H1 (cell line): ENCODE measurements at regions of chr15 and their contacts with region 1.

Region 1: GRCh38 chr15:65824031-65824743 is 32.1 kb upstream of the DENND4A start:
- DNase-seq: peak in 1 of 2 experiments; percentile 70
- H3K4me3 ChIP-seq: no peak overlapping the region
- H3K27ac ChIP-seq: no peak overlapping the region
- H3K4me1 ChIP-seq: peaks cover 0 to 6% (median 2%) of the 10 kb centered on the region in 4 experiments; a peak in 4 of 7 replicates
- H3K27me3 ChIP-seq: no peaks in the 10 kb centered on the region
- CTCF ChIP-seq: peak; percentile 42 to 89 (median 68)
- EP300 ChIP-seq: no peak
- POLR2A ChIP-seq: no peak
- RAD21 ChIP-seq: peak; percentile 59 to 74

Region 2: DNA sequence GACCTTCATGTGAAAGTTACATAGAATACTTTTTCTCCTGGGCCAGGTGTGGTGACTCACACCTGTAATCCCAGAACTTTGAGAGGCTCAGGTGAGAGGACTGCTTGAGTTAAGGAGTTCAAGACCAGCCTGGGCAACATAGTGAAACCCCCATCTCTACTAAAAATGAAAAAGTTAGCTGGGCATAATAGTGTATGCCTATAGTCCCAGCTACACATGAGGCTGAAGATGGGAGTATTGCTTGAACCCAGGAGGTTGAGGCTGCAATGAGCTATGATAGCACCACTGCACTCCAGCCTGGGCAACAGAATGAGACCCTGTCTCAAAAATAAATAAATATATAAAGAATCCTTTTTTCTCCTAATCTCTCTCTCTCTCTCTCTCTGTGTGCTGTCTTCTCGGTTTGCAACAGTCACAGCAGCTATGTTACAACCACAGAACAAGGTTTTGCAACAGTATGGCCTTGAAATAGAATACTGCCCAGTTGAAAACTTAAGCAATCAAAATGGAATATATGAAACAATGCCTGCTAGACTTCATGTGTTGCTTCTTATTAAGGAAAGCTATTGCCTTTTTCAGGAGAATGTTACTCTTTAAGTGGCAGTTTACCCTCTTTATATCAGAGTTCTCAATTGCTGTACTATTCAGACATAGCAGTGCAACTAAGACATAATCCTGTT is 19.8 kb before region 1 on chr15:
- CTCF ChIA-PET with region 1: interaction called, 11 read pairs
- POLR2A ChIA-PET with region 1: no interaction called
- DNase-seq: no peak
- H3K4me3 ChIP-seq: no peak overlapping the region
- H3K27ac ChIP-seq: no peak overlapping the region
- H3K4me1 ChIP-seq: peaks cover 0 to 5% (median 0%) of the 10 kb centered on the region in 4 experiments; a peak in 1 of 7 replicates
- H3K27me3 ChIP-seq: no peaks in the 10 kb centered on the region
- CTCF ChIP-seq: no peak
- EP300 ChIP-seq: no peak
- POLR2A ChIP-seq: no peak
- RAD21 ChIP-seq: no peak

Region 3: DNA sequence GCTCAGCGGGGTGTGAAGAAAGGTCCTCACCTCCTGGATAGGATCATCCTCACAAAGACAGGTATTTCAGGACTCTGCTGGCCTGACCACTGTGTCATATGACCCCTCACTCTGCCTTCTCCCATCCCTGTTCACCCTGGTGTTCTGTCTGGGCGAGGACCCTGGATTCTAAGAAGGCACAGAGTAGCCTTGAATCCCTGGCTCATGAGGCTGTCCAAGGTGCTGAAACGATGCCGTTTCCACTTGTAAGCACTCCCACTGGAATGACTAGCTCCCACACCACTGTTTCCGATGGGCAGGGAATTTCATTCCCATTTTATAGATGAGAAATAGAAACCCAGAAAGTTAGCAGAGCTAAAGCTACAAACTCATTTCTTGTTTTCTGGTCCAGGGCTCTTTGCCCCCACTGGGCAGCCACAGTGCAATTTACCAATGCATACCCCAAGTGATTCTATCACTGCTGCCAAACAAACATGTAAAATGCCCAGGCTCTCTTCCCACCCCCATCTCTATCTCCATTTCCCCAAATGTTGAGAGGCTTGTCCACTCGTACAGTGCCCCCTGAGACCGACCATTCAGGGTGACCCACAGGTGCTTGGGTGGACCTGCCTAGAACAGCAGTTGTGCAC is 128.4 kb after region 1 on chr15:
- CTCF ChIA-PET with region 1: no interaction called
- POLR2A ChIA-PET with region 1: no interaction called
- DNase-seq: peak in 1 of 2 experiments; percentile 74
- H3K4me3 ChIP-seq: no peak overlapping the region
- H3K27ac ChIP-seq: no peak overlapping the region
- H3K4me1 ChIP-seq: peaks cover 4 to 14% (median 10%) of the 10 kb centered on the region in 4 experiments; a peak in 6 of 7 replicates
- H3K27me3 ChIP-seq: no peaks in the 10 kb centered on the region
- CTCF ChIP-seq: no peak
- EP300 ChIP-seq: no peak
- POLR2A ChIP-seq: no peak
- RAD21 ChIP-seq: no peak